Prostate gland (tissue), 2 donors: ENCODE measurements at regions of chr1 and their contacts with region 1.

Region 1: GRCh38 chr1:170593173-170594011 is 61.4 kb downstream of the GORAB start:
- DNase-seq: no peak
- H3K4me3 ChIP-seq: no peak overlapping the region
- H3K27ac ChIP-seq: peak overlapping the region; percentile 16 to 51
- H3K4me1 ChIP-seq: no peaks in the 10 kb centered on the region
- H3K27me3 ChIP-seq: no peaks in the 10 kb centered on the region
- CTCF ChIP-seq: no peak
- POLR2A ChIP-seq: no peak

Region 2: GRCh38 chr1:170664828-170665612 is 71.6 kb after region 1 on chr1:
- intact Hi-C with region 1: loop called (anchors 5 kb)
- DNase-seq: no peak
- H3K4me3 ChIP-seq: peak overlapping the region; percentile 45 to 56
- H3K27ac ChIP-seq: peak overlapping the region; percentile 82 to 83
- H3K4me1 ChIP-seq: no peaks in the 10 kb centered on the region
- H3K27me3 ChIP-seq: no peaks in the 10 kb centered on the region
- CTCF ChIP-seq: no peak
- POLR2A ChIP-seq: no peak